A673 (cell line): ENCODE measurements at regions of chr3 and their contacts with region 1.

Region 1: DNA sequence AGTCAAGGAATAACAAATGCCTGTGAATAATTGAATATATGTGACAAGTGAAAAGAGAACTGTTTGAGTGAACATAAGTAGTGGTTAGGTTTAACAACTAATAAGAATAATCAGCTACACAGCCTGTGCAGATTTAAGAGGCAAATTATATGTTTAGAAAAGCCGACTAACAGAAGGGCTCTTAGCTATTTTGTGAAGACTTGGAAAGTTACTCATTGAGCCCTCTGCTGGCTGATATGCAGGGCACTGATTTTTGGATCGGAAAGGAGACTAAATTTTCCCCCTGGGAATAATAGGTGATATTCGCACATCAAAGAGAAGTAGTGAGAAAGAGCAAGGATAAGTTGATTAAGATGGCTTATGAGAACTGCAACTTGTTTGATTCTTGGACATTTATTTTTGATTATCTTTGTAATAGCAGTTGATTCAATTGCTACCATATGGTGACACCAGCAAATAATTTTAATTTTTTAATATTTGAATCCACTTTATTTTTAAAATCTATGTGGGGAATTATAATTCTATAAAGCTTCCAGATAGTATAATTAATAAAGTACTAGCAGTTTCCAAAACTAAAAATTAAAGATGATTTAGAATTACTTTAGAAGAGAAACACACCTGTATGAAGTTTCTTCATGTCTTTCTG is 156.2 kb downstream of the NLGN1 start:
- DNase-seq: peak; percentile 65
- H3K4me3 ChIP-seq: no peak overlapping the region
- H3K27ac ChIP-seq: no peak overlapping the region
- H3K4me1 ChIP-seq: peaks cover 6% of the 10 kb centered on the region
- H3K27me3 ChIP-seq: no peaks in the 10 kb centered on the region
- CTCF ChIP-seq: peak; percentile 80

Region 2: DNA sequence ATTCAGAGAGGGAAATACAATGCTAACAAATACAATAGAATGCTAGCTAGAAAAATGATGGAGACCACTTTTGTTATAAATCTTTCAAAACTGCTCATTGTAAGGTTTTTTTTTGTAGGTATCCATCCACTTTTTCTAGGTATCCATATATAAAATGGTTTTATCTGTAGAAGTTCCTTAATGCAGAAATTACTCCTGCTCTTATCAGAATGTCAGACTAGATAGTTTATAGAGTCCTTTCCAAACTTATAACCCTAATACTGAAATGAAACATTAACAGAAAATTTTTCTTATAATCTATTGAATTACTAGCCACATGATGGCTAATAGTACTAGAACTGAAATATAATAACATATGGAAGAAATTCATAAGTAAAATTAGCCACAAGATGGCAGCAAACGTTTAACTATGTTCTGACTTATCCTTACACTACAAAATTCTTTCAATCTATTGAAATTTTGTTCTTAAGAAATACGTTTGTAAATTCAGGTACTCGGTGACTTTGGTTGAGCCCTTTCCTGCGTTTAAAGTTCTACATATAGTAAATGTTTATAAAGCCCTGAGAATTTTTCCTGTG is 744.7 kb before region 1 on chr3:
- CTCF ChIA-PET with region 1: no interaction called
- POLR2A ChIA-PET with region 1: no interaction called
- intact Hi-C with region 1: loop called (anchors 10 kb)
- DNase-seq: peak; percentile 64
- H3K4me3 ChIP-seq: no peak overlapping the region
- H3K27ac ChIP-seq: no peak overlapping the region
- H3K4me1 ChIP-seq: peaks cover 15% of the 10 kb centered on the region
- H3K27me3 ChIP-seq: no peaks in the 10 kb centered on the region
- CTCF ChIP-seq: peak; percentile 60

Region 3: DNA sequence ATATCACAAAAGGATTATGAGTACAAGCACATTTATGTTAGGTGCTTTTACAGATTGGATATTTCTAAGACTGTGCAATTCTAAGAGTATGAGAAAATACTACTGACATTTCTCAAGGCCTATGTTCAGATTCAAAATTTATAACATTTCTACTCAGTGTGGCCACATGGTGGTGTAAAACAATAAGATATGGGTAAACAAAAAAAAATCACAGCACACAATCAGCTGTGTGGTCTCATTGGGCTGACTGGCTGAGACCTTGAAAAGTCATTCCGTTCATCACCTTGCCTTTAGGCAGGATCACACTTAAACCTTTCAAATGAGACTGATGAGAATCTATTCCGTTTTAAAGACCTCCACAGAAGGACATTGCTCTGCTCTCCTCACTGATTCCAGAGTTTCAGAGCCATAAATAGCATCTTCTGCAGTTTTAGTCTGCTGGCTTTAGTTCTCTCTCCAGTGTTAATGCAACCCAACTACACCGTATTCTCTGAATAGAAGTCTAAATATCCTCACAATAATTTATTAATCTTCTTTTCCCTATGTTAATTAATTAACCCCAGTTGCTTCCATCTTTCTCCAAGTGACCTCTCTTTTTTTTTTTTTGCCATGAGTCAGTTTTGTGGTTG is 570.9 kb before region 1 on chr3:
- CTCF ChIA-PET with region 1: no interaction called
- POLR2A ChIA-PET with region 1: no interaction called
- intact Hi-C with region 1: loop called (anchors 2 kb)
- DNase-seq: peak; percentile 54
- H3K4me3 ChIP-seq: no peak overlapping the region
- H3K27ac ChIP-seq: no peak overlapping the region
- H3K4me1 ChIP-seq: peaks cover 8% of the 10 kb centered on the region
- H3K27me3 ChIP-seq: no peaks in the 10 kb centered on the region
- CTCF ChIP-seq: peak; percentile 53; the same call in 1 of the 2 replicates

Region 4: GRCh38 chr3:173055228-173055933 is 498.4 kb before region 1 on chr3:
- CTCF ChIA-PET with region 1: no interaction called
- POLR2A ChIA-PET with region 1: no interaction called
- intact Hi-C with region 1: no loop called
- DNase-seq: no peak
- H3K4me3 ChIP-seq: no peak overlapping the region
- H3K27ac ChIP-seq: no peak overlapping the region
- H3K4me1 ChIP-seq: no peaks in the 10 kb centered on the region
- H3K27me3 ChIP-seq: no peaks in the 10 kb centered on the region
- CTCF ChIP-seq: no peak

Region 5: DNA sequence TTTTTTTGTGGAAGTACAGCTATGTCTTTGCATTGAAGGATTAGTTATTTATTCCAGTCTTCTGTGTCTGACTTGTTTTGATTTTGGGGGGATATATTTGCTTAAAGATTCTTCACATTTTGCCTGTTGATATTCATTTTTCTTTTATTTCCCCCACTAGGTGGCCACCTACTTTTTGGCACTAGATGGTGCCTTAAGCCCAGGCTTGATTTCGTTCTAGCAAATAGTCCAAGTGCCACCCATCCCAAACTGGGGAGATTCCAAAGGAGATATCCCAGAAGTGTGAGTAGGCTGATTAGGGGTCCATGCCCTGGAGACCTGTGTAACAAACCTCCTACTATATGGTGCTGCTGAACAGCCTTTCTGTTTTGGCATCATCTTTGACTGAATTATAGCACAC is 332.7 kb before region 1 on chr3:
- CTCF ChIA-PET with region 1: no interaction called
- POLR2A ChIA-PET with region 1: no interaction called
- intact Hi-C with region 1: loop called (anchors 10 kb)
- DNase-seq: peak; percentile 55
- H3K4me3 ChIP-seq: no peak overlapping the region
- H3K27ac ChIP-seq: no peak overlapping the region
- H3K4me1 ChIP-seq: no peaks in the 10 kb centered on the region
- H3K27me3 ChIP-seq: no peaks in the 10 kb centered on the region
- CTCF ChIP-seq: peak; percentile 69

Region 6: DNA sequence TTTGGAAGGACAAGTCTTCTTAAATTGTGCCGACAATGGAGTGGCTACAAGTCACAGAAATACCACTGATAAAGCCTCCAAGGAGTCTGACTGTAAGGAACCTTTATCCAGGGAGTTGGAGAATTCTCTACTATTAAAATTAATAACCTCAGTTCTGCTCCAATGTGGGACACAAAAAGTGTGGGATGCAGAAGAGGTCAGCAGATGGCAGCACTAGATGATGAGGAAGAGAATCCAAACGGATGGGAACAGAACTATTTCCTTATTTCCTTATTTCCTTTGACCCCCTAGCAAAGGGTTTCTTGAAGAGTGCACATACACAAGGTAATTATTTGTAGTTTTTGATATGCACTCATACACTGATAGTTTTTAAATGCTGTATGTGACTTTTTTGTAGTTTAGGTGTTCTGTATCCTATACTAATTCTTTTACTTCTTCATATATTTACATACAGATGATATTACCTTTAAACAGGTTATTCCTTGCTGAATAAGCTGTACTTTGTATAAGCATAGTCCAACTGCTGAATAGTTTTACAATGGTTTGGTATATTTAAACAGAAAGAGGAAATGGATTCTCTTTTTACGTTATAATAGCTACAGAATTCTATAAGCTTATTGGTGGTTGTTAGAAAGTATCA is 181.8 kb before region 1 on chr3:
- CTCF ChIA-PET with region 1: no interaction called
- POLR2A ChIA-PET with region 1: no interaction called
- intact Hi-C with region 1: loop called (anchors 1 kb)
- DNase-seq: peak; percentile 57
- H3K4me3 ChIP-seq: no peak overlapping the region
- H3K27ac ChIP-seq: no peak overlapping the region
- H3K4me1 ChIP-seq: no peaks in the 10 kb centered on the region
- H3K27me3 ChIP-seq: no peaks in the 10 kb centered on the region
- CTCF ChIP-seq: peak; percentile 70

Region 7: DNA sequence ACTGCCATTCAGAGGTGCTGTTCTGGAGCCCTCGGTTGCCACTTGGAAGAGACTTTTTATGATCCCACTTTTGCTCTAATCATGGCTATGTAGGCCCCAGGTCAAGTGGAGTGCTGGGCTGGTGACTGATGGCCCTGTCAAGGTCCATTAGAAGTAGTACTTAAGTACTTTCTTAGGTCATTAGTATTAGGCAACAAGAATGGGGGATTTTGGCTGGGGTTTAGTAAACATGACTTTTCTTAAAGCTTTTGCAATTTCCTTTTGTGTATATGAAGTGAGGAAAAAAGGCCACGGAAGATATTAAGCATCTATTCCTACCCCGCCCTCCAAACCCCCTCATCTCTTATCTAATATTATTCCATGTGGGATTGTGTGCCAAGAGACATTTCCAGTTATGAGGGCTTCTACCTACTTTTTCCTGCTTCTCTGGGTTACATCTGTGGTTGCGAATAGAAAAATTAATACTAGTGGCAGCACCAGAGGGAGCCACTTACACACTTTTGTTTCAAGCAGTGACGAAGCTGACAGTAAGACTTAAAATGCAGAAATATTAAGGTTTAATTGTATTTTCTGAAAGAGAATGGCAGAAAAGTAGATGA is 142.3 kb before region 1 on chr3:
- CTCF ChIA-PET with region 1: interaction called, 7 read pairs
- POLR2A ChIA-PET with region 1: no interaction called
- intact Hi-C with region 1: loop called (anchors 2 kb)
- DNase-seq: peak; percentile 52
- H3K4me3 ChIP-seq: no peak overlapping the region
- H3K27ac ChIP-seq: no peak overlapping the region
- H3K4me1 ChIP-seq: no peaks in the 10 kb centered on the region
- H3K27me3 ChIP-seq: no peaks in the 10 kb centered on the region
- CTCF ChIP-seq: peak; percentile 66